PC-3 (cell line): ENCODE measurements at regions of chr18 and their contacts with region 1.

Region 1: DNA sequence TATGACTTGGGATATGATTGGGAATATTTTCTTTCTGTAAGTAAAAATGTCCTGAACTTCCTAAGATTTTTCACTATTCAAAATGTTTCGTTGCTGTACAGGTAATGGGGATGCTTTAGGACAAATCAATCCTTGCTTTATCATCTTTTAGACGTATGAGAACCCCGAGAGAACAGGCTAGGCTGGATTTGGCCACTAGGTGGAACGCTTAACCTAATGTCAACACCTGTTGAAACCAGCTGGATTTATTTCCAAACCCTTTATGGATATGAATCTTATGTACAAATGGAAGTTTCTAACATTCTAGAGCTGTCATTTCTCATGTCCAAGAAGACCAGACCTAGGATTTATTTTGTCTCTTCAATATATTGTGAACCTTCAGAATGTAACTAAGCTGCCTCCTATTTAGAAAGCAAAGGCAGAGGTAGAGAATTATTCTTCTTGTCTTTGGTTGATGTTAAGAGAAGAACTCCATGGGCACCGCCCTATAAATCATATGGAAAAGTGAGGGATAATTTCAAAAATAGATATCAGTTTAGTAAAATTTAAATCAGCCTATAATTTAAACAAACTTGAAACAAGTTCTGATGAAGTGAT is 96.7 kb downstream of the PMAIP1 start:
- DNase-seq: peak; percentile 82
- ATAC-seq: peak; percentile 92
- H3K4me3 ChIP-seq: no peak overlapping the region
- H3K27ac ChIP-seq: no peak overlapping the region
- H3K4me1 ChIP-seq: no peaks in the 10 kb centered on the region
- H3K27me3 ChIP-seq: no peaks in the 10 kb centered on the region
- CTCF ChIP-seq: peak; percentile 95

Region 2: GRCh38 chr18:60019463-60019840 is 23.0 kb after region 1 on chr18:
- CTCF ChIA-PET with region 1: no interaction called
- POLR2A ChIA-PET with region 1: no interaction called
- intact Hi-C with region 1: no loop called
- DNase-seq: peak; percentile 94
- ATAC-seq: peak; percentile 91
- H3K4me3 ChIP-seq: peak overlapping the region; percentile 46
- H3K27ac ChIP-seq: peak overlapping the region; percentile 89
- H3K4me1 ChIP-seq: peaks cover 26% of the 10 kb centered on the region
- H3K27me3 ChIP-seq: no peaks in the 10 kb centered on the region
- CTCF ChIP-seq: no peak

Region 3: DNA sequence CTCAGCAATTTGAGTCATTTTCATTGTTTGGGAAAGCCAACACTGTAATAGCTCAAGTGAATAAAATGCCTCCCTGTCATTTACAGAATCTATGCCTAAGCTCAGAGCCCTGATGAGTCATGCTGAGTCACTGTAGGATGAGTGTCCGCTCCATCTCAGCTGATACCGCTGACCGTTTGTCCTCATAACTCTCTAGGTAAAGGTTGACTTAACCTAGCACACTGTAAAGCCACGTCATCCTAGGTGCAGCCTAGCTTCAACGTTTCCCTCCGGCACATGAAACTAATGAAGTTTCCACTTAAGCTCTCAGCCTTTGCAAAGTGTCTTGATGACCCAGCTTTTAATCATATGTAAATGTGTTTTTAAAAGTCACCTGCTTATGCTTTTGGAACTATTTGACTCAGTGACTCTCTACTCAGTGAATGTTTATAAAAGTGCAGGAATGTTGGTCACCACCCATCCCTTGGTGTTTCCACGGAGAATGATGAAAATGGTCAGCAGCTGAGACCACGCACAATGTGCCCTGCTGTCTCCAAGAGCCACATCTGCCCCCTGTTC is 57.4 kb after region 1 on chr18:
- CTCF ChIA-PET with region 1: interaction called, 4 read pairs
- POLR2A ChIA-PET with region 1: no interaction called
- intact Hi-C with region 1: loop called (anchors 5 kb)
- DNase-seq: peak; percentile 100
- ATAC-seq: peak; percentile 93
- H3K4me3 ChIP-seq: peak overlapping the region; percentile 42
- H3K27ac ChIP-seq: peak overlapping the region; percentile 97
- H3K4me1 ChIP-seq: peaks cover 36% of the 10 kb centered on the region
- H3K27me3 ChIP-seq: no peaks in the 10 kb centered on the region
- CTCF ChIP-seq: no peak

Region 4: DNA sequence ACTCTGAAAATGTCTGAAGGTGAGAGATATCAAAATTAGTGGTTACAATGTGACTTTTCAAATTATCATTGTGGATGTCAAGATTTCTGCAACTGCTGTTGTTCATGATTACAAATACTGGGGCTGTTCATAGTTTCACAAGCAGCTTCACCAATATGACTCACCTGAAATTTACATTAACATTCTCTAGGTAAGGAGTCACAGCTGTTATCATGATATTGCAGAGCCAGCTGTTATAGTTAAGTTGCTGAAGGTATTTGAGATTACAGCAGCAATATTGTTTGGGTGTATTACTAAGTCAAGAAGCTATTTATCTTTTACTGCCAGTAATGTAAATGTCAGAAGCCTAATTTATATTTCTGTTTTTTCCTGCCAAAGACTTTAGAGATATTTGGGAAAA is 236.1 kb after region 1 on chr18:
- CTCF ChIA-PET with region 1: no interaction called
- POLR2A ChIA-PET with region 1: no interaction called
- intact Hi-C with region 1: loop called (anchors 10 kb)
- DNase-seq: peak; percentile 89
- ATAC-seq: peak; percentile 97
- H3K4me3 ChIP-seq: no peak overlapping the region
- H3K27ac ChIP-seq: peak overlapping the region; percentile 22; the same call in 1 of the 2 replicates
- H3K4me1 ChIP-seq: peaks cover 24% of the 10 kb centered on the region
- H3K27me3 ChIP-seq: no peaks in the 10 kb centered on the region
- CTCF ChIP-seq: no peak

Region 5: GRCh38 chr18:60347526-60348045 is 351.1 kb after region 1 on chr18:
- CTCF ChIA-PET with region 1: no interaction called
- POLR2A ChIA-PET with region 1: no interaction called
- intact Hi-C with region 1: loop called (anchors 2 kb)
- DNase-seq: peak; percentile 88
- ATAC-seq: peak; percentile 77
- H3K4me3 ChIP-seq: no peak overlapping the region
- H3K27ac ChIP-seq: peak overlapping the region; percentile 91
- H3K4me1 ChIP-seq: peaks cover 16% of the 10 kb centered on the region; the same call in 1 of the 2 replicates
- H3K27me3 ChIP-seq: no peaks in the 10 kb centered on the region
- CTCF ChIP-seq: no peak

Region 6: GRCh38 chr18:60413944-60414547 is 417.6 kb after region 1 on chr18:
- CTCF ChIA-PET with region 1: interaction called, 13 read pairs
- POLR2A ChIA-PET with region 1: no interaction called
- intact Hi-C with region 1: loop called (anchors 1 kb)
- DNase-seq: peak; percentile 53
- ATAC-seq: peak; percentile 89
- H3K4me3 ChIP-seq: no peak overlapping the region
- H3K27ac ChIP-seq: no peak overlapping the region
- H3K4me1 ChIP-seq: no peaks in the 10 kb centered on the region
- H3K27me3 ChIP-seq: no peaks in the 10 kb centered on the region
- CTCF ChIP-seq: peak; percentile 85

Region 7: DNA sequence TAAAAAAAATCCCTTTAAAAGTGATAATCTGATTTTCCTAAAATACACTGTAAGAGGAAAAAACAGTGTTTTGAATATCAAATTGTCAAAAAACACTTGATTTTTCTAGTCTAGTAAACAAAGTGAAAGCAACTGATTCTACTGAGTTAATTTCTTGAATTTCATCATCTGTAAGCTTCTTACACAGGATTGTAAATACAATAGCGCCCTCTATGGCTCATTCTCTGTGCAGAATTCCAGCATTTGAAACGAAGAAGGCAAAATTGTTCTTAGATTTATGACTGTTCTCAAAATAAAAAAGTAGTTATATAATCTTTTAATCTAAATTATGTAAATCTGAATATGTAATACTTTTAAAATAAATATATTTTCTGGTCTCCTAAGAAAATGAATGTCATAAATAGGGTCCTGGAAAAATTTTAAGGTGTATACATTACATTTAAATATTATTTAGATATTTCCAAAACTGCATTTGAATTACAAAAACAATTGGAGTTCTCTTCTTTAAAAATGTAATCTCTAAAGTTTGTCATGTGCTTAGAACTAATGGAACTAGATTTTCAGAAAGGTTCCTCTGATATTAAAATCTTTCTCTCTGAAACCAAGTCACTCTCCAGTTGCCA is 553.0 kb after region 1 on chr18:
- CTCF ChIA-PET with region 1: no interaction called
- POLR2A ChIA-PET with region 1: no interaction called
- intact Hi-C with region 1: loop called (anchors 1 kb)
- DNase-seq: peak; percentile 87
- ATAC-seq: peak; percentile 59
- H3K4me3 ChIP-seq: peak overlapping the region; percentile 46; the same call in 1 of the 2 replicates
- H3K27ac ChIP-seq: no peak overlapping the region
- H3K4me1 ChIP-seq: no peaks in the 10 kb centered on the region
- H3K27me3 ChIP-seq: no peaks in the 10 kb centered on the region
- CTCF ChIP-seq: peak; percentile 81